ENCODE measurements at regions of chr14 and their contacts with region 1.

Region 1: GRCh38 chr14:24630872-24631477 is 3.0 kb downstream of the GZMB start:
- DNase-seq: no peak
- H3K4me3 Mint-ChIP-seq: peak overlapping the region; percentile 94
- H3K27ac Mint-ChIP-seq: peak overlapping the region; percentile 97
- H3K4me1 Mint-ChIP-seq: peaks cover 70% of the 10 kb centered on the region
- H3K27me3 Mint-ChIP-seq: no peaks in the 10 kb centered on the region

Region 2: GRCh38 chr14:24665440-24665991 is 34.5 kb after region 1 on chr14:
- intact Hi-C with region 1: loop called (anchors 1 kb)
- DNase-seq: peak; percentile 38
- H3K4me3 Mint-ChIP-seq: peak overlapping the region; percentile 62
- H3K27ac Mint-ChIP-seq: peak overlapping the region; percentile 85
- H3K4me1 Mint-ChIP-seq: peaks cover 92% of the 10 kb centered on the region
- H3K27me3 Mint-ChIP-seq: no peaks in the 10 kb centered on the region

Measured in activated T-helper 1 cell treated with anti-CD3 and anti-CD28 coated beads, Interleukin-12 subunit alpha, Interleukin-12 subunit beta, Interleukin-2, Interleukin-4 antibody, amounts not matched to agents 30 ng/mL and 10 ng/mL and 1 ng/mL, durations not matched to agents 14 hours and 24 hours and 36 hours (primary cell).